ENCODE measurements at regions of chr3 and their contacts with region 1.

Region 1: DNA sequence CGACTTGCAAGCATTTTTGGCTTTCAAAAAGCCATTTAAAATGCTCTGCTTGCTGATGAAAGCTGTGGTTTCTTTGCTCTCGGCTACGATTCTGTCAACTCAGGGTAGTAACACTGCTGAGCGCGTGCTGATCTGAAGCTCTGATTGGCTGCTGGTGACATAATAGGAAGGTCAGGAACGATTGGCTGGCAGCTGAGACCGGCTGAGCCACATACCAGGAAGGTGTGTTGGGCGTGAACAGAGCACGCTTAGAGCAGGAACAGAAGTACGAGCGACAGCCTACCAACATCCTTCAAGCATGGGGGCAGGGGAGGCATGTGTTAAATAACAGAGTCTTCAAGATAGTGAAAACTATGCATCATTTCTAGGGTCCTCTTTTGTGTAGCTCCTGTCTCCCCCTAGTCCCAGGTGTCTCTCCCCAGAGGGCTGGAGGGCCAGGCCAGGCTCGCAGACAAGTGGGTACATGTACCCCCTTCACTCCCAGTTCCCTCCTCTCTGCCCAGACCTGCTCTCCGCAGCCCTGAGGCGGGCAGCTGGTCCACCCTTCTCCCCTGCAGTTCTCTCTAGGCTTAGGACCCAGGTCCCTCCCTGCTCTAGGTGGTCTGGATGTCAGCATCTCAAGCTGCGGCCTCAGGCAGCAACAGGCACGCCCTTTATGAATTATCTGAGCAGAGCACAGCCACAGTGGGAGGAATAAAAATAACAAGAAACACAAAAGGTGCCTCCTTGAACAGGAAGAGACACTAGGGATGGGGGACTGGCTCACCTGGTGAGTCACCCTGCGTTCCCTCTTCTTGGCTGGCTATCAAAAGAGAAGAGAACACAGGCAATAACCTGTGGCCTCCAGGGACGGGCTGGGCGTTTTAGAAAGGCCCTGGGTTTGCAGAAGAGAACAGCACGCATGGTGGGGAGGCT is 76.0 kb downstream of the TAMM41 start:
- DNase-seq: peak; percentile 91
- H3K4me3 Mint-ChIP-seq: peak overlapping the region; percentile 10
- H3K27ac Mint-ChIP-seq: peak overlapping the region; percentile 71
- H3K4me1 Mint-ChIP-seq: peaks cover 18% of the 10 kb centered on the region
- H3K27me3 Mint-ChIP-seq: no peaks in the 10 kb centered on the region

Region 2: DNA sequence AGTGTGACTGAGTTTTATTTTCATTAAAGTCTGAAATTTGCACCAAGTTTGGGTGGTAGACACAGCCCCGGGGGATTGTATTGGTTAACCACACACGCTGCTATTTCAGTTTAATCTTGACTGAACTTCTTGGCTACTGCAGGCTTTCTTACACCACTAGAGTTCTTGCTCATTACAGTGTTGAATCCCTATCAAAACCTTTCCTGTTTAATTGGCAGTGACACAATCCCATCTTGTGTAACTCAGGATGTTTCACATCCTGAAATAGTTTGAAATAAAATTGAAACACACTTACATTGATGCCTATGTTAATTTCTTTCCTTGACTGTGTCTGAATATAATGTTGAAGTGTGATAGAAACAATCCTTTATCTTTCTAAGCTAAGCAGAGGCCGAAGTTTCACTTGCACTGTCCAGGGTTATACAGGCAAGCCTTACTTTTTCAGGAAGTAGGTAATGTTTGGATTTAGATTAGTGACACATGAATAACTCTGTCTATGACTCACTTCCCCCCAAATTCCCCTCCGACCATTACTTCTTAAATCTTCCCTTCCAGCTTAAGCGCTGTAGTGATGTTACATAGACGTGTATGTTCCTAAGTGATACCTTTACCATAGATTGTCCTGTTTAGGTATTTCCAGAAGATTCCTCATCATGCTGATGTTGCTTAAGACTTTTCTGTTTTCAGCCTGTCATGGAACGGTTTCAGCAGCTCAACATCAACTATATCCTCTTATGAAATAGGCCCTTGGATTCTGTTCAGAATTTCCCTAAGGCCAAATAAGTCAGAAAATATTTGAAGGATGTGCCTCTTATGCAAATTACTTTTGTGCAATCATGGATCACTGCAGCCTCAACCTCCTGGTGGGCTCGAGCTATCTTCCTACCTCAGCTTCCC is 481.7 kb before region 1 on chr3:
- CTCF ChIA-PET with region 1: no interaction called
- intact Hi-C with region 1: loop called (anchors 5 kb)
- DNase-seq: peak; percentile 14
- H3K4me3 Mint-ChIP-seq: no peak overlapping the region
- H3K27ac Mint-ChIP-seq: peak overlapping the region; percentile 84
- H3K4me1 Mint-ChIP-seq: peaks cover 48% of the 10 kb centered on the region
- H3K27me3 Mint-ChIP-seq: no peaks in the 10 kb centered on the region

Region 3: DNA sequence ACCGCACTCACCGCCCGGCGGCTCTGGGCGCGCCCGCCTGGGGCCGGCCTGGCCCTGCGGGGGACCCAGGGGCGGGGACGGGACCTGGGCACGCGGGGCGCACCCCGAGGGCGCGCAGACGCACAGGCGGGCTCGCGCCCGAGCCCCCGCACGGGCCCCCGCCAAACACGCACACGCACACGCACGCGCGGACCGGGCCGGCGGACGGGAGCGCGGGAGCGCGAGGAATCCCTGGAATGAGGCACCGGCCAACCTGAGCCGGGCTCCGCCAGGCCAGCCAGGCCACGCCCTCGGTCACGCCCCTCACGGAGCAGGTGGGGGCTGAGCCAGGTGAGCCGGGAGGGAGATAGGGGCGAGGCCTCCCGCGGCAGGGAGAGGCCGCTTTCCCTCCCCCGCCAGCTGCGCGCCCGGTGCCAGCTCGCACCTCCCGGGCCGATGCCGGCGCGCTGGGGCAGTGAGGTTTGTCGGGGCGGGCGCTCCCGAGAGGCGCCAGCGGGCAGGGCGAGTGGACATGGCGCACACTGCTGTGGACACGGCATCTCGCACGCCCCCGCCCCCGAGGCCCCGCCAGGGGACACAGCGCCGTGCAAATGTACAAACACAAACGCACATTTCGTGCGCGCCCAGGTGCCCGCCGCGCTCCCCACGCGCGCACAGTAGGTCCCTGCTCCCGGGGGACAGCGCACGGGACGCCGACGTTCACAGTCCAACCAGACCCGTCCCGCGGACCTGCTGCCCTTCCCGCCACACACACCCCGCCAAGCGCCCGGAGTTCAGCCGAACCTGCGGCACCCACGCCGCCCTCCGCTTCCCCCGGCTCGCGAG is 51.1 kb before region 1 on chr3:
- CTCF ChIA-PET with region 1: no interaction called
- intact Hi-C with region 1: loop called (anchors 1 kb)
- DNase-seq: peak; percentile 73
- H3K4me3 Mint-ChIP-seq: peak overlapping the region; percentile 88
- H3K27ac Mint-ChIP-seq: no peak overlapping the region
- H3K4me1 Mint-ChIP-seq: peaks cover 17% of the 10 kb centered on the region
- H3K27me3 Mint-ChIP-seq: peaks cover 5% of the 10 kb centered on the region

Region 4: GRCh38 chr3:11755276-11755675 is 15.5 kb before region 1 on chr3:
- CTCF ChIA-PET with region 1: no interaction called
- intact Hi-C with region 1: no loop called
- DNase-seq: no peak
- H3K4me3 Mint-ChIP-seq: no peak overlapping the region
- H3K27ac Mint-ChIP-seq: no peak overlapping the region
- H3K4me1 Mint-ChIP-seq: no peaks in the 10 kb centered on the region
- H3K27me3 Mint-ChIP-seq: no peaks in the 10 kb centered on the region

Measured in activated naive CD4-positive, alpha-beta T cell treated with anti-CD3 and anti-CD28 coated beads for 36 hours (primary cell).